Esophagus squamous epithelium (tissue), 5 donors: ENCODE measurements at regions of chr1 and their contacts with region 1.

Region 1: DNA sequence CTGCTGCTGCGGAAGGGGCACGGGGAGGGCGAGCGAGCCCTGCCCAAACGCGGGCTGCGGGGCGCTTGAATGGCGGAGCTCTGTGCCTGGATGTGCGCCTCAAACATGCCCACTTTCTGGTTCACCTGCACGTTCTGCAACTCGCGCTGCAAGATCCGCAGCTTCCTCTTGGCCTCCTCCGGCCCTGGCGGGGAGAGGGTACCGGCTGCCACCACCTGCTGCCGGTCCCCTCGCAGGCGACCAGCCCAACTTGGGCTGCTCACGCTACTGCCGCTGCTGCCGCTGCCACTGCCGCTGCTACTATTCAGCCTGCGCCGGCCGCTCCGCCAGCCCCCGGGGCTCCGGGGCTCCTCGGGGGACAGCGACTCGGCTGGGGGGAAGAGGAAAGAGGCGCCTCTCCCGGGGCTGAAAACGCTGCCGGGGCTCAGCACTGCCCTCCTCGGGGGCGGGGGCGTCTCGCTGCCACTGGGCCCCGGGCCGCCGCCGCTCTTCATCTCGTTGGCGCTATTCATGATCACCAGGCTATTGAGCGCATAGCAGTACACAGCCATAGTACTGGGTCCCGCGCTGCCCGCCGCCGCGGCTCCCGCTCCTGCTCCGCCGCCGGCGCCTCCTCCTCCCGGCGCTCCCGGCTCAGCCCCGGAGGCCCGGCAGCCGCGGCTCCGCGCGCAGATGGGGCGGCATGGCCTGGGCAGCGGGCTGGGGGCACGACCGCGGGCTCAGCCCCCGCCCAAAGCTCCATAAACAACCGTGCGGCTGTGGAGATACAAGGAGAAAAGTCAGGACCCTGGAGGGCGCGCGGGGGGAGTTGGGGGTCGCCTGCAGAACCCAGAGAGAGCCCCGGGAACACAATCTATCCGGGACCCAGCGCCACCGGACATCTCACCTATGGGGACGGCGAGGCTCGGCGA is 1.9 kb downstream of the ITPKB start:
- DNase-seq: no peak
- H3K4me3 ChIP-seq: peak overlapping the region; percentile 68 to 93 (median 84)
- H3K27ac ChIP-seq: peak overlapping the region; percentile 86 to 96 (median 92)
- H3K4me1 ChIP-seq: peaks cover 24 to 63% (median 45%) of the 10 kb centered on the region in 3 donors
- H3K27me3 ChIP-seq: no peaks in the 10 kb centered on the region
- CTCF ChIP-seq: peak in 1 of 6 experiments; percentile 9
- POLR2A ChIP-seq: peak in 1 of 4 donors; percentile 36

Region 2: GRCh38 chr1:226642876-226643576 is 94.1 kb before region 1 on chr1:
- intact Hi-C with region 1: loop called (anchors 10 kb)
- DNase-seq: no peak
- H3K4me3 ChIP-seq: no peak overlapping the region
- H3K27ac ChIP-seq: peak overlapping the region; percentile 27 to 82 (median 68)
- H3K4me1 ChIP-seq: peaks cover 22 to 66% (median 42%) of the 10 kb centered on the region in 3 donors
- H3K27me3 ChIP-seq: no peaks in the 10 kb centered on the region
- CTCF ChIP-seq: no peak
- POLR2A ChIP-seq: no peak

Region 3: DNA sequence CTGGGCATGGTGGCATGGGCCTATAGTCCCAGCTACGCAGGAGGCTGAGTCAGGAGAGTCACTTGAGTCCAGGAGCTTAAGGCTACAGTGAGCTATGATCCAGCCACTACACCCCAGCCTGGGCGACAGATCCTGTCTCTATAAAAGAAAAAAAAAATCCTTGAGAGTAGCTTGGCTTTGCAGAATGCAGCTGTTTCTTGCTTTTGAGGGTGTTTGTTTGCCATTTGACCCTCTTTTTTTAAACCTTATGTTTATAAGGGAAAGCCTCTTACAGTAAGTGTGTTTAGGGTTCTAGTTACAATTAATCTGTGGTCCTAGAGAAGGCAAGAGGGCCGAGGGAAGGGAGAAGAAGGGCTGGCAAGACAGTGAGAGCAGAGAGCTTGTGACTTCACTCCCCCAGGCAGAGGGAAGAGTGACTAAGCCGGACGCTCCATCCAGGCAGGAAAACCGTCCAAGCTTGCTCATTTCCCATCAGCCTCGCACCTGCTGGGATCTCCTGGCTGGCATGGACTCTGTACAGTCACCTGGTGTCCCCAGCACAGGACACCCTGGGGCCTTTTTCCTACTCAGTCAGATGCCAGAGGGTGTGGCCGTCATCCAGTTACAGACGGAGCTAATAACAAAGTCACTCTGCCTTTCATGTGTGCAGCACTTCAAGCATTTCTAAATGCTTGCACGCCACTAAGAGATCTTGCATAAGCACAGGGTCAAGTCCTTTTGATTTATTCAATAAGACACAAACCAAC is 77.8 kb after region 1 on chr1:
- intact Hi-C with region 1: loop called (anchors 5 kb)
- DNase-seq: no peak
- H3K4me3 ChIP-seq: no peak overlapping the region
- H3K27ac ChIP-seq: peak overlapping the region; percentile 58 to 87 (median 84)
- H3K4me1 ChIP-seq: peaks cover 0 to 32% (median 29%) of the 10 kb centered on the region in 3 donors
- H3K27me3 ChIP-seq: no peaks in the 10 kb centered on the region
- CTCF ChIP-seq: no peak
- POLR2A ChIP-seq: peak in 1 of 4 donors; percentile 24